Naive thymus-derived CD4-positive, alpha-beta T cell (primary cell): ENCODE measurements at regions of chr9 and their contacts with region 1.

Region 1: DNA sequence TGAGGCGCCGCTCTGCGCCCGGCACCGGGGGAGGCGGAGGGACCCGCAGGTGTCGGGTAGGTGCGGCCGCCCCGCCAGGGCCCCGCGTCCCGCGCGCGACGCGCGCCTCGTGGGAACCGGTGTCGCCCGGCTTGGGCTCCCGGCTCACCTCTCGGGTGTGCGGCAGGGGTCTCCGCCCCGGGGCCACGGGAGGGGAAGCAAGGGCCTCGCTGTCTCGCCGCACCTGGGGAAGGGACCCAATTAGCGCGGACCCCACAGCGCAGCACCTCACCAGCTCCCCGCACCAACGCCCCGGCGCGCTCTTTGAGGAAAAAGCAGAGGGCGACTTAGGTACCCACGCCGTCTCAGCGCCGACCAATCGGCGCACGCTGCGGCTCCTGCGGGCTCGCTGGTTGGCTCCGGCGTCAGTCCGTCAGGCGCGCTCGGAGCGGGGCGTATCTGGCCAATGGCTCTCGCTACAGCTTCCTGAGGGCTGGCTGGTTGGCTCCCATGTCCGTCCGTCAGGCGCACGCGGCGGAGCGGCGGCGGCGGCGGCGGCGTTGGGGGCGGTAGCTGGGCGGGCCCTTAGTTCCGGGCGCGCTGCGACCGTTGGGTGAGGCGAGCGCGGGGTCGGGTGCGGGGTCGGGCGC is at the start of gene TRAF2:
- DNase-seq: peak; percentile 93 to 98 (median 96)
- ATAC-seq: peak; percentile 95
- H3K4me3 ChIP-seq: peak within 1 kb of the TSS; percentile 76
- H3K4me3 Mint-ChIP-seq: peak within 1 kb of the TSS; percentile 83 to 99 (median 86)
- H3K27ac ChIP-seq: peak within 1 kb of the TSS; percentile 97
- H3K27ac Mint-ChIP-seq: peak within 1 kb of the TSS; percentile 78 to 95 (median 89)
- H3K4me1 ChIP-seq: peaks cover 26 to 29% of the 10 kb centered on the region in 2 donors
- H3K4me1 Mint-ChIP-seq: peaks cover 17 to 53% (median 37%) of the 10 kb centered on the region in 7 donors
- H3K27me3 ChIP-seq: no peaks in the 10 kb centered on the region
- H3K27me3 Mint-ChIP-seq: no peaks in the 10 kb centered on the region
- total RNA-seq, gene TRAF2: 14.6 to 72.8 (median 29.6) TPM

Region 2: DNA sequence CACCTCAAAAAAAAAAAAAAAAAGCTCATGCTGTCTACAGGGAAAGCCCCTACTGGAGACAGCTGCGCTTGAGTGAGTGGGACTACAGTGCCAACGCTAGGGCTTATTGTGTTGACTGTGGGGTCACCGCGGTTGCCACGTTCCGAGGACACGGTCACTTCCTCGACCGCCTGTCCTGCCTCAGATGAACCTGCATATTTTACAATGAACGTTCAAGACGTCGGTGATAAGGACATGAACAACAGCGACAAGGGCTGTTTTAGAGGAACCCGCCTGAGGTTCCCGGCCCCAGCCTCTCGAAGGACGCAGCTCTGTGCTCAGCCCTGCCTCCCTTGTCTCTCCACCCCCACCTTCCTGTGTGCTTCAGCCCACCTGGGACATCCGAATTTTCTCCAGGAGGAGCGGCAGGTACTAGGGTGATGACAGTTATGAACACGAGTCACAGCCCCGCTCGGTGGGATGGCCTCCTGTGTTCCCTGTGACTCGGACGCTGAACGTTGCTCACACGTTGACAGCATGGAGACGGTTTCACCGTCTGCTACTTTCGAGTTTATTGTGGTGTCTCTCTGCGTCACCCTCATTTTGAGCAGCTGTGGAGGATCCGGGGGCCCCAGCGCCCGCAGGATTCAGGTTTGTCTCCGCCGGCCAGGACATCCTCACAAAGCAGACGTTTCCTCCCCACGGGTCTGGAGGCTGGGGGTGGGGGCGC is 185.0 kb before region 1 on chr9:
- CTCF ChIA-PET with region 1: no interaction called
- POLR2A ChIA-PET with region 1: no interaction called
- intact Hi-C with region 1: no loop called
- DNase-seq: peak; percentile 35 to 68 (median 55)
- ATAC-seq: peak; percentile 83
- H3K4me3 ChIP-seq: peak overlapping the region; percentile 65
- H3K4me3 Mint-ChIP-seq: peak overlapping the region; percentile 76 to 91 (median 84)
- H3K27ac ChIP-seq: peak overlapping the region; percentile 30
- H3K27ac Mint-ChIP-seq: peak overlapping the region; percentile 25 to 93 (median 83)
- H3K4me1 ChIP-seq: peaks cover 7 to 17% of the 10 kb centered on the region in 2 donors
- H3K4me1 Mint-ChIP-seq: peaks cover 10 to 25% (median 14%) of the 10 kb centered on the region in 7 donors
- H3K27me3 ChIP-seq: no peaks in the 10 kb centered on the region
- H3K27me3 Mint-ChIP-seq: peaks cover 0 to 29% (median 5%) of the 10 kb centered on the region in 5 donors

Region 3: GRCh38 chr9:136721339-136722092 is 164.5 kb before region 1 on chr9:
- CTCF ChIA-PET with region 1: no interaction called
- POLR2A ChIA-PET with region 1: no interaction called
- intact Hi-C with region 1: no loop called
- DNase-seq: no peak
- ATAC-seq: no peak
- H3K4me3 ChIP-seq: no peak overlapping the region
- H3K4me3 Mint-ChIP-seq: no peak overlapping the region
- H3K27ac ChIP-seq: no peak overlapping the region
- H3K27ac Mint-ChIP-seq: peak overlapping the region in 3 of 9 donors; percentile 56 to 59 (median 58)
- H3K4me1 ChIP-seq: peaks cover 9 to 11% of the 10 kb centered on the region in 2 donors
- H3K4me1 Mint-ChIP-seq: peaks cover 7 to 25% (median 19%) of the 10 kb centered on the region in 7 donors
- H3K27me3 ChIP-seq: no peaks in the 10 kb centered on the region
- H3K27me3 Mint-ChIP-seq: no peaks in the 10 kb centered on the region

Region 4: DNA sequence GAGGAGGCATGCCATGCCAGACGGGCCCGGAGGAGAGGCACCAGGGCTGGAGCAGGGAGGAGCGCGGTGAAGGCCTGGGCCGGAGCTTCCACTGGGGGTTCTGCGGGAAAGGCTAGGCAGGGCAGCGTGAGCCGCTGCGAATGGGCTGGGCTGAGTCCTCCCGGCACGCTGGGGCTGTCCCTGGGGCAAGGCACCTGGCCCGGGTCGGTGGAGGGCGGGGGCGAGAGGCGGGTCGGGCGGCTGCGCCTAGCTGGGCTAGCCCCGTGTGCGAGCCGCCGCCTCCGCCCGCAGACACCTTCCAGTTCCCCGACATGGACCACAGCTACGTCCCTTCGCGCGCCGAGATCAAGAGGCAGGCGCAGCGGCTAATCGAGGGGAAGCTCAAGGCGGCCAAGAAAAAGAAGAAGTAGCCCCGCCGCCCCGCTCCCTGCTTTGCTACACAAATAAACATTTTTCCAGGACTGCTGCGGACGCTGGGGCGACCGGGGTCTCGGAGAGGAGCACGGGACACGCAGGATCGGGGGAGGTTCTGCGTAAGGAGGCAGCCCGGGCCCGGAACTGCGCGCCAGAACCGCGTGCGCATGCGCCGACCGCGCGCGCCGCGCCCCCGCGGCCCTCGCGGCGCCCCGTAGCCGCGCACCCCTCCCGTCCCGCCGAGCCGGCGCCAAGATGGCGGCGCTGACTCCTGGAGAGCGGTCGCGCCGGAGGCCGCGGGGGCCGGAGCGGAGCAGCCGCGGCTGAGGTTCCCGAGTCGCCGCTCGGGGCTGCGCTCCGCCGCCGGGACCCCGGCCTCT is 78.6 kb before region 1 on chr9 and contains the start of gene RABL6:
- CTCF ChIA-PET with region 1: no interaction called
- POLR2A ChIA-PET with region 1: interaction called, 4 read pairs
- intact Hi-C with region 1: loop called in 1 of 2 experiments (anchors 2 kb)
- DNase-seq: peak; percentile 70 to 92 (median 86)
- ATAC-seq: peak; percentile 95
- H3K4me3 ChIP-seq: peak within 1 kb of the TSS; percentile 69
- H3K4me3 Mint-ChIP-seq: peak within 1 kb of the TSS; percentile 78 to 92 (median 90)
- H3K27ac ChIP-seq: peak within 1 kb of the TSS; percentile 94
- H3K27ac Mint-ChIP-seq: peak within 1 kb of the TSS; percentile 76 to 95 (median 90)
- H3K4me1 ChIP-seq: peaks cover 20 to 32% of the 10 kb centered on the region in 2 donors
- H3K4me1 Mint-ChIP-seq: peaks cover 22 to 52% (median 33%) of the 10 kb centered on the region in 7 donors
- H3K27me3 ChIP-seq: no peaks in the 10 kb centered on the region
- H3K27me3 Mint-ChIP-seq: peaks cover 0 to under 1% (median 0%) of the 10 kb centered on the region in 5 donors
- total RNA-seq, gene RABL6: 59.6 to 100 (median 60.9) TPM

Region 5: GRCh38 chr9:136865735-136866103 is 20.3 kb before region 1 on chr9:
- CTCF ChIA-PET with region 1: no interaction called
- POLR2A ChIA-PET with region 1: interaction called, 9 read pairs
- intact Hi-C with region 1: loop called (anchors 1 kb)
- DNase-seq: no peak
- ATAC-seq: no peak
- H3K4me3 ChIP-seq: peak overlapping the region; percentile 68
- H3K4me3 Mint-ChIP-seq: peak overlapping the region; percentile 55 to 94 (median 87)
- H3K27ac ChIP-seq: peak overlapping the region; percentile 99
- H3K27ac Mint-ChIP-seq: peak overlapping the region; percentile 36 to 94 (median 87)
- H3K4me1 ChIP-seq: peaks cover 7 to 8% of the 10 kb centered on the region in 2 donors
- H3K4me1 Mint-ChIP-seq: peaks cover 4 to 24% (median 19%) of the 10 kb centered on the region in 7 donors
- H3K27me3 ChIP-seq: no peaks in the 10 kb centered on the region
- H3K27me3 Mint-ChIP-seq: no peaks in the 10 kb centered on the region

Region 6: DNA sequence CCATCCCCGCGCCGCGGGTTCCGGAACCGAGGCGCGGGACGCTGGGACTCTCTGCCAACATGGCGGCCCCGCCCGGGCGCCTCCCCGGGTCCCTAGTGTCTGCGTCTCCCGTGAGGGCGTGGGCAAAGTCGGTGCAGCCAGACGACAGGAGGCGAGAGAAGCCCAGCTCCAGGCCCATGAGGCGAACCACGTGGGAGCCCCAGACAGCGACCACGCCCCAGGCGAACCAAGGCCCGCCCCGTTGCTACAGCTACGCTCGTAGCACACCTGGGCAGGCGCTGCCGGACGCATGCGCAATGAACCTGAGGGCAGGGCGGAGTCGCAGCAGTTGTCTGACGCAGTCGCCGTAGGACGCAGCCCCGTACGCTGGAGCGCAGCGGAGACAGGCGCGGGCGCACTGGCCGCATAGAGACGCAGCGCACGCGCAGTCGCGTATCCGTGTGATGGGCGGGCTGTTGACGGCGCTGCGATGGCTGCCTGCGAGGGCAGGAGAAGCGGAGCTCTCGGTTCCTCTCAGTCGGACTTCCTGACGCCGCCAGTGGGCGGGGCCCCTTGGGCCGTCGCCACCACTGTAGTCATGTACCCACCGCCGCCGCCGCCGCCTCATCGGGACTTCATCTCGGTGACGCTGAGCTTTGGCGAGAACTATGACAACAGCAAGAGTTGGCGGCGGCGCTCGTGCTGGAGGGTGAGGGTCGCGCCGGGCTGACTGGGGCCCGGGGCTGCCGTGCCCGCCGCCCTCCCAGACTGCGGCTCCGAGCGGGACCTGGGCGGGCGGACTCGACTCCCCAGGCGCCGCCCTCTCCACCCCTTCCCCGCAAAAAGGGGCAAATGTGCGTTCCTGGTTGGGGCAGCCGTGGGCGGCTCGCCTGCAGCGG is 200.7 kb after region 1 on chr9 and contains the start of gene MAN1B1:
- CTCF ChIA-PET with region 1: no interaction called
- POLR2A ChIA-PET with region 1: no interaction called
- intact Hi-C with region 1: loop called in 1 of 2 experiments (anchors 5 kb)
- DNase-seq: peak; percentile 96 to 100 (median 99)
- ATAC-seq: peak; percentile 92
- H3K4me3 ChIP-seq: peak within 1 kb of the TSS; percentile 73
- H3K4me3 Mint-ChIP-seq: peak within 1 kb of the TSS; percentile 88 to 96 (median 92)
- H3K27ac ChIP-seq: peak within 1 kb of the TSS; percentile 92
- H3K27ac Mint-ChIP-seq: peak within 1 kb of the TSS; percentile 92 to 98 (median 95)
- H3K4me1 ChIP-seq: peaks cover 18% of the 10 kb centered on the region in 2 donors
- H3K4me1 Mint-ChIP-seq: peaks cover 25 to 34% (median 30%) of the 10 kb centered on the region in 7 donors
- H3K27me3 ChIP-seq: no peaks in the 10 kb centered on the region
- H3K27me3 Mint-ChIP-seq: no peaks in the 10 kb centered on the region
- total RNA-seq, gene MAN1B1: 57.3 to 74.2 (median 70.2) TPM